ENCODE measurements at regions of chr20 and their contacts with region 1.

Region 1: GRCh38 chr20:44885392-44886265 is at the start of gene YWHAB:
- DNase-seq: peak; percentile 100
- H3K4me3 ChIP-seq: peak within 1 kb of the TSS; percentile 98
- H3K4me3 Mint-ChIP-seq: peak within 1 kb of the TSS; percentile 99
- H3K27ac Mint-ChIP-seq: peak within 1 kb of the TSS; percentile 97
- H3K4me1 ChIP-seq: peaks cover 34% of the 10 kb centered on the region
- H3K4me1 Mint-ChIP-seq: peaks cover 34% of the 10 kb centered on the region
- H3K27me3 ChIP-seq: no peaks in the 10 kb centered on the region
- H3K27me3 Mint-ChIP-seq: no peaks in the 10 kb centered on the region
- CTCF ChIP-seq: peak; percentile 19 to 22
- total RNA-seq, gene YWHAB: 522 and 539 TPM in 2 replicates

Region 2: DNA sequence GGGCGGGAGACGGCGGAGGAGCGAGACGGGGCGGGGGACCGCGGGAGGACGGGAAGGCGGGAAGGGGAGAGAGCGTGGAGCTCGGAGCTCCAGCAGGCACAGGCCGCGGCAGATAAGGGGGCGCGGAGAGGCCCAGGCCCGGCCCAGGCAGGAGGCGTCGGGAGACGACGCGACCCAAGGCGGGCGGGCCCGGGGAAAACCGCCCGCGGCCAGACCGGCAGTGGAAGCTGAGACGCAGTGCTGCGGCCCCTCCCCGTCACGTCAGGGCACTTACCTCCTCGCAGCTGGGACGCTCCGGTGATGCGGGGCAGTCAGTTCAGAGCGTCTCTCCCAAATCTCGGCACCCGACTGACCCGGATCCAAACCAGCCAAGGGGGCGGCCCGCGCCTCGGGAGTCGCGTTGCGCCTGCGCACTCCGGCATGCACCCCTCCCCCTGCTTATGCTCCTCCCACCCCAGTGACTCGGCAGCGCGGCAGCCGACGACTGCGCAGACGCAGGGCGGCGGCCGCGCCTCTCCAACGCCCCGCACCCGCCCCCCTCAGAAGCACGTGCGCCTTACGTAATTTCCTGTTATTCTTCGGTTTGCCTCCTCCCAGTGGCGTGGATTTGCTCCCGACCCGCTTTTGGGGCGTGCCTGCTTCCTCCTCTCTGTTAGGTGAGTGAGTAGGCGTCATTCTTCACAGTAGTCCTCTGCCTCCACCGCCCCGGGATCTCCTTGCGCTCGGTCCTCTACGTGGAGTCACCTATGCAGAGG is 675.0 kb before region 1 on chr20 and contains the start of gene OSER1:
- CTCF ChIA-PET with region 1: no interaction called
- POLR2A ChIA-PET with region 1: no interaction called
- intact Hi-C with region 1: loop called (anchors 10 kb)
- DNase-seq: peak; percentile 100
- H3K4me3 ChIP-seq: peak within 1 kb of the TSS; percentile 74
- H3K4me3 Mint-ChIP-seq: peak within 1 kb of the TSS; percentile 95
- H3K27ac Mint-ChIP-seq: peak within 1 kb of the TSS; percentile 96
- H3K4me1 ChIP-seq: peaks cover 19% of the 10 kb centered on the region
- H3K4me1 Mint-ChIP-seq: peaks cover 27% of the 10 kb centered on the region
- H3K27me3 ChIP-seq: no peaks in the 10 kb centered on the region
- H3K27me3 Mint-ChIP-seq: no peaks in the 10 kb centered on the region
- CTCF ChIP-seq: no peak
- total RNA-seq, gene OSER1: 79.7 and 82.3 TPM in 2 replicates

Region 3: GRCh38 chr20:44521484-44522481 is 363.8 kb before region 1 on chr20 and contains the start of gene SERINC3:
- CTCF ChIA-PET with region 1: no interaction called
- POLR2A ChIA-PET with region 1: no interaction called
- intact Hi-C with region 1: loop called (anchors 10 kb)
- DNase-seq: peak; percentile 98 to 100
- H3K4me3 ChIP-seq: peak within 1 kb of the TSS; percentile 77
- H3K4me3 Mint-ChIP-seq: peak within 1 kb of the TSS; percentile 68
- H3K27ac Mint-ChIP-seq: peak within 1 kb of the TSS; percentile 72
- H3K4me1 ChIP-seq: peaks cover 68% of the 10 kb centered on the region
- H3K4me1 Mint-ChIP-seq: peaks cover 68% of the 10 kb centered on the region
- H3K27me3 ChIP-seq: no peaks in the 10 kb centered on the region
- H3K27me3 Mint-ChIP-seq: no peaks in the 10 kb centered on the region
- CTCF ChIP-seq: peak in 1 of 2 experiments; percentile 22
- total RNA-seq, gene SERINC3: 179 and 185 TPM in 2 replicates

Region 4: DNA sequence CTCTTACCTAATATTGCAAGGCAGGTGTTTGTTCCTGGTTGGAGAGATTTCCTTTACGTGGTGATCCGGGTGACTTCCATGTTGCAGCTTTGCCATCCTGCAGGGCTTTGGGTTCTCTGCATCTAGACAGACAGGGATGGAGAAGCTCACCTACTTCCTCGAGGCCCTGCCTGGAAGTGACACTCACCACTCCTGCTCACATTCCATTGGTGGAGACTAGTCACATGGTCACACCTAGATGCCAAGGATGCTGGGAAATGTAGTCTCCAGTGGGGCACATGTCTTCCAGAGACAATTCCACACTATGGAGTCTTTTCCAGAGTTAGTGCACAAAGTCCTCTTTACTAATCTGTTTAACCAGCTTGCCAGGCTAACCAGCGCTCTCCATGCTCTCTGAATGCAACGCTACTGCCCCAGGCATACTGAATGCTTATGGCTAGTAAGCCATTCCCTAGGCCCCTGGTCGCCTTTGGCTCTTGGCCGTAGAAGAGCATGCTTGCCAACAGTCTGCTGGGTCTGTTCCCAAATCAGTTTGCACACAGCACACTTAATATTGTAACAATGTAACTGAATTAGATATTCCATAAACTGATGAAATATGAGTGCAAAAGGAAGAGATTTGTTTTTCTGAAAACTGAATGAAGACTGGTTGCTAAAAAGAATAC is 146.7 kb before region 1 on chr20:
- CTCF ChIA-PET with region 1: interaction called, 3 read pairs
- POLR2A ChIA-PET with region 1: interaction called, 3 read pairs
- intact Hi-C with region 1: loop called (anchors 1 kb)
- DNase-seq: peak; percentile 96 to 98
- H3K4me3 ChIP-seq: no peak overlapping the region
- H3K4me3 Mint-ChIP-seq: peak overlapping the region; percentile 56
- H3K27ac Mint-ChIP-seq: no peak overlapping the region
- H3K4me1 ChIP-seq: peaks cover 12% of the 10 kb centered on the region
- H3K4me1 Mint-ChIP-seq: peaks cover 16% of the 10 kb centered on the region
- H3K27me3 ChIP-seq: no peaks in the 10 kb centered on the region
- H3K27me3 Mint-ChIP-seq: no peaks in the 10 kb centered on the region
- CTCF ChIP-seq: no peak

Region 5: GRCh38 chr20:44856856-44857448 is 28.7 kb before region 1 on chr20:
- CTCF ChIA-PET with region 1: interaction called, 3 read pairs
- POLR2A ChIA-PET with region 1: interaction called, 9 read pairs
- intact Hi-C with region 1: loop called (anchors 2 kb)
- DNase-seq: peak; percentile 50 to 69
- H3K4me3 ChIP-seq: no peak overlapping the region
- H3K4me3 Mint-ChIP-seq: peak overlapping the region; percentile 13
- H3K27ac Mint-ChIP-seq: peak overlapping the region; percentile 86
- H3K4me1 ChIP-seq: peaks cover 24% of the 10 kb centered on the region
- H3K4me1 Mint-ChIP-seq: peaks cover 27% of the 10 kb centered on the region
- H3K27me3 ChIP-seq: no peaks in the 10 kb centered on the region
- H3K27me3 Mint-ChIP-seq: no peaks in the 10 kb centered on the region
- CTCF ChIP-seq: no peak

Region 6: GRCh38 chr20:44909872-44910689 is 24.5 kb after region 1 on chr20 and contains the start of gene PABPC1L:
- CTCF ChIA-PET with region 1: interaction called, 16 read pairs
- POLR2A ChIA-PET with region 1: interaction called, 28 read pairs
- intact Hi-C with region 1: loop called (anchors 1 kb)
- DNase-seq: peak; percentile 95
- H3K4me3 ChIP-seq: peak within 1 kb of the TSS; percentile 82
- H3K4me3 Mint-ChIP-seq: peak within 1 kb of the TSS; percentile 85
- H3K27ac Mint-ChIP-seq: peak within 1 kb of the TSS; percentile 92
- H3K4me1 ChIP-seq: peaks cover 21% of the 10 kb centered on the region
- H3K4me1 Mint-ChIP-seq: peaks cover 19% of the 10 kb centered on the region
- H3K27me3 ChIP-seq: no peaks in the 10 kb centered on the region
- H3K27me3 Mint-ChIP-seq: no peaks in the 10 kb centered on the region
- CTCF ChIP-seq: no peak
- total RNA-seq, gene PABPC1L: 242 and 255 TPM in 2 replicates

Region 7: GRCh38 chr20:44960103-44960852 is 74.6 kb after region 1 on chr20 and contains the start of gene TOMM34:
- CTCF ChIA-PET with region 1: interaction called, 6 read pairs
- POLR2A ChIA-PET with region 1: interaction called, 13 read pairs
- intact Hi-C with region 1: no loop called
- DNase-seq: peak; percentile 98 to 100
- H3K4me3 ChIP-seq: peak within 1 kb of the TSS; percentile 86
- H3K4me3 Mint-ChIP-seq: peak within 1 kb of the TSS; percentile 86
- H3K27ac Mint-ChIP-seq: peak within 1 kb of the TSS; percentile 75
- H3K4me1 ChIP-seq: peaks cover 60% of the 10 kb centered on the region
- H3K4me1 Mint-ChIP-seq: peaks cover 56% of the 10 kb centered on the region
- H3K27me3 ChIP-seq: no peaks in the 10 kb centered on the region
- H3K27me3 Mint-ChIP-seq: no peaks in the 10 kb centered on the region
- CTCF ChIP-seq: peak in 1 of 2 experiments; percentile 33
- total RNA-seq, gene TOMM34: 131 and 139 TPM in 2 replicates